ENCODE measurements at regions of chr2 and their contacts with region 1.

Region 1: DNA sequence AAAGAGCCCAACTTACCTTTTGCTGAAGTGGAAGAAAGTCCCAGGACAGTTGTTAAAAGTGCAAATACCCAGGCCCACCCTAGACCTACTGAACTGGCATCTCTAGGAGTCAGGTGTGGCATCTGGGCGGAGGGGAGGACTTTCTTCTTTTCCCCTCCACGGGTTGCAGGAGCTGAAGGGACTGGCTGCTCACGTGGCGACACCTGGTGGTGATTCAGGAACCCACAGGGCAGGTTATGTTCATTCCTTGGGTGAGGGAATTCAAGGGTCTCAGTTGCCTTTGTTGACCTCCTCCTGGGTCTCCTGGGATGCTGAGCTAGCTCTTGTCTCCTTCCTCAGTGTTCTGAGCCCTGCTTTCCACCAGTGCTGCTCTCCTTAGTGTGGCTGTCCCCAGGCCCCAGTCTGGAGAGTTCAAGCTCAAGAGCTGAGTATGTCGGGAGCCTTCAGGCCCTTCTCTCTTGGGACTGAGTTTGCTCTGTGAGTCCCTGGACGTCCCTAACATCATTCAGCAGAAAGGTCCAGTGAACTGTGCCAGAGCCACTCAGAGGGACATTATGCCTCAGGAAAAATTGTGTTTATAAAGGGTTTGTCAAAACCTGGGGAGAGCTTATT is 56.9 kb downstream of the DYSF start:
- DNase-seq: peak; percentile 74 to 80 (median 76)
- ATAC-seq: peak; percentile 89
- H3K4me3 ChIP-seq: no peak overlapping the region
- H3K27ac ChIP-seq: no peak overlapping the region
- H3K4me1 ChIP-seq: no peaks in the 10 kb centered on the region; a peak in 1 of 5 replicates
- H3K27me3 ChIP-seq: peaks cover 0 to 40% of the 10 kb centered on the region in 2 experiments; a peak in 4 of 5 replicates
- CTCF ChIP-seq: peak; percentile 83 to 91 (median 89)
- EP300 ChIP-seq: no peak
- POLR2A ChIP-seq: no peak
- RAD21 ChIP-seq: peak; percentile 85 to 96

Region 2: DNA sequence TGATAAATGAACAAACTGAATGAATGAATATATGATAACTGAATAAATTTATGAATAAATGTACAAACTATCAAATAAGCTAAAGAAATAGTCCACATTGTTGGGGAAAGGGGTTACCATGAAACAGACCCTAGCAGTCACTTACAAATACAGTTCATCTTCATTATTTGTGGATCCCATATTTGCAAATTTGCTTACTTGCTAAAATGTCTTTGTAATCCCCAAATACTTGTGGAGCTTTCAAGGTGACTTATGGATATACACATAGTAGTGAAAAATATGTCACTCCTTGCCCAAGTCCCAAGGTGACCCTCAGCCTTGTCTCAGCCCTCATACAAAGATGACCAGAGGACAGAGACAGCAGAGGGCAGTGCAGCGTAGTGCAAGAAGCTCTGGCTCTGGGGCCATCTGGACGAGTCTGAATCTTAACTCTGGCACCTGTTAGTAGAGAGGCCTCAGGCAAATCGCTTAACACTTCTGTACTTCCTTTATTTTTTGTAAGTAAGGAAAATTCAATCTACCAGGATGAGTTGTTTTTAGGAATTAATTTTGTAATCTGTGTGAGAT is 286.5 kb before region 1 on chr2:
- CTCF ChIA-PET with region 1: interaction called, 9 read pairs
- POLR2A ChIA-PET with region 1: no interaction called
- in situ Hi-C with region 1: no loop called
- intact Hi-C with region 1: loop called (anchors 5 kb)
- DNase-seq: peak in 3 of 4 experiments; percentile 12 to 56 (median 29)
- ATAC-seq: peak; percentile 59
- H3K4me3 ChIP-seq: no peak overlapping the region
- H3K27ac ChIP-seq: no peak overlapping the region
- H3K4me1 ChIP-seq: peaks cover 5 to 9% of the 10 kb centered on the region in 2 experiments; a peak in 3 of 5 replicates
- H3K27me3 ChIP-seq: peaks cover 0 to 4% of the 10 kb centered on the region in 2 experiments; a peak in 1 of 5 replicates
- CTCF ChIP-seq: peak; percentile 59 to 67 (median 65)
- EP300 ChIP-seq: no peak
- POLR2A ChIP-seq: no peak
- RAD21 ChIP-seq: peak; percentile 52 to 64

Region 3: DNA sequence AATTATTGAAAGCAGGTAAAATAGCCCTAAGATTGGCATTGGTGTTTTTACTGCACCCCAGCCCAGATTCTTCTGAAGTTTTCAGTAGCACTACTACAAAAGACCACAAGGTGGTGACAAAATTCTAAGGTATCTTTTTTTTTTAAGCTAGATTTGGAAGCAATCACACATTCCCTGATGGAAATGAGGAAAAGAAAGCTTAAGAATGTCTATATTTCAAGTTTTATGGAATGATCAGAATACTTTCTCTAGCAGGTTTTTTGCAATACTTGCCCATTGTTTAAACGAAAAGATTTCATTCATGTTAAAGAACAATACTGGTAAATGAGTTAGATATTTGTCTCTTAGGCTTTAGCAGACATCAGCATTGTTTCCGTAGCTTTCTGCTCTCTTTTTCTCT is 210.8 kb before region 1 on chr2:
- CTCF ChIA-PET with region 1: interaction called, 71 read pairs
- POLR2A ChIA-PET with region 1: interaction called, 4 read pairs
- in situ Hi-C with region 1: loop called (anchors 5 kb)
- intact Hi-C with region 1: loop called (anchors 1 kb)
- DNase-seq: peak; percentile 33 to 51 (median 44)
- ATAC-seq: peak; percentile 53; the same call in 2 of the 3 replicates
- H3K4me3 ChIP-seq: no peak overlapping the region
- H3K27ac ChIP-seq: no peak overlapping the region
- H3K4me1 ChIP-seq: no peaks in the 10 kb centered on the region
- H3K27me3 ChIP-seq: peaks cover 7 to 12% of the 10 kb centered on the region in 2 experiments; a peak in 4 of 5 replicates
- CTCF ChIP-seq: peak; percentile 51 to 84 (median 52); a peak in 5 of 6 replicates
- EP300 ChIP-seq: no peak
- POLR2A ChIP-seq: no peak
- RAD21 ChIP-seq: peak; percentile 65 to 80

Region 4: DNA sequence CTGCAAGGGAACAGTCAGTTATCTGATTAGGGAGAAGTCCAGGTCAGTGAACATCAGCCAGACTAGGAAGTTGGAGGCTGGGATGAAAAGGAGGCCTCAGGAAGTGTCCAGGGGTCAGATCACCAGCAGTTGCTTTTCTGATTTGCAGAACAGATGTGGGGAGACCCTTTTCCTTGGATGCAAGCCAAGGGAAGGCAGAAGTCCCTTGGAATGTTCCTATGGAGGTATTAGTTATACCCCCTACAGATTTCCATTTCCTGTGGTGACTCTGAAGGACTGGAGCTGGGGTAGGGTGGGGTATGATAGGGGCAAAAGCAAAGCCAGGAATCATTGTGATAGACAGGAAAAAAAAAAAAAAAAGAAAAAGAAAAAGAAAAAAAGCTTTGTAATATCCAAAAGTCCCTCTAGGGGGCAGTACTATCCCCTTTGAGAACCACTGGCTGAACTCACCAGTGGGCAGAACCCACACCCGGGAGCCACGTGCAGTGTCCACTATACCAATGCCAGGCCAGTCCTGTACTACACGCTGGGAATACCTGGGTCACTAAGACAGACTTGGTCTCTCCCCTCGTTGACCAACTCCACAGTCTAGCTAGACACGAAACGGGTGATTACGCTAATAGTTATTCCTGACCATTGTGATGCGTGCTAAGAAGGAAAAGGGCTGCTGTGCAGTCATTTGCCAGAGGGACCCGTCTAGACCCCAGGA is 49.6 kb before region 1 on chr2:
- CTCF ChIA-PET with region 1: no interaction called
- POLR2A ChIA-PET with region 1: no interaction called
- in situ Hi-C with region 1: no loop called
- intact Hi-C with region 1: loop called (anchors 2 kb)
- DNase-seq: peak; percentile 12 to 63 (median 54)
- ATAC-seq: peak; percentile 55
- H3K4me3 ChIP-seq: no peak overlapping the region
- H3K27ac ChIP-seq: no peak overlapping the region
- H3K4me1 ChIP-seq: peaks cover 6 to 11% of the 10 kb centered on the region in 2 experiments; a peak in 3 of 5 replicates
- H3K27me3 ChIP-seq: peaks cover 0 to 8% of the 10 kb centered on the region in 2 experiments; a peak in 1 of 5 replicates
- CTCF ChIP-seq: peak; percentile 36 to 62 (median 61); a peak in 5 of 6 replicates
- EP300 ChIP-seq: no peak
- POLR2A ChIP-seq: no peak
- RAD21 ChIP-seq: peak in 1 of 2 experiments; percentile 42; a peak in 2 of 4 replicates

Region 5: GRCh38 chr2:71545572-71546274 is 35.4 kb after region 1 on chr2:
- CTCF ChIA-PET with region 1: no interaction called
- POLR2A ChIA-PET with region 1: no interaction called
- in situ Hi-C with region 1: no loop called
- intact Hi-C with region 1: no loop called
- DNase-seq: peak; percentile 63 to 74 (median 64)
- ATAC-seq: peak; percentile 93
- H3K4me3 ChIP-seq: no peak overlapping the region
- H3K27ac ChIP-seq: no peak overlapping the region
- H3K4me1 ChIP-seq: 0 out of 5 replicates have a peak, but pooled peaks cover 0 to 3% of the 10 kb centered on the region in 2 experiments
- H3K27me3 ChIP-seq: peaks cover 7 to 30% of the 10 kb centered on the region in 2 experiments; a peak in 4 of 5 replicates
- CTCF ChIP-seq: peak; percentile 80 to 89 (median 81)
- EP300 ChIP-seq: no peak
- POLR2A ChIP-seq: no peak
- RAD21 ChIP-seq: peak; percentile 82 to 84

Measured in K562 (cell line).